Head of caudate nucleus (tissue), 42 donors: ENCODE measurements at regions of chr2 and their contacts with region 1.

Region 1: GRCh38 chr2:32946314-32947075 is at the start of gene LTBP1:
- DNase-seq: peak; percentile 53 to 88 (median 72)

Region 2: GRCh38 chr2:32772638-32773447 is 173.7 kb before region 1 on chr2:
- intact Hi-C with region 1: loop called (anchors 5 kb)
- DNase-seq: peak in 22 of 42 donors; percentile 5 to 67 (median 28)

Region 3: GRCh38 chr2:32812316-32812715 is 134.2 kb before region 1 on chr2:
- intact Hi-C with region 1: no loop called
- DNase-seq: no peak

Region 4: DNA sequence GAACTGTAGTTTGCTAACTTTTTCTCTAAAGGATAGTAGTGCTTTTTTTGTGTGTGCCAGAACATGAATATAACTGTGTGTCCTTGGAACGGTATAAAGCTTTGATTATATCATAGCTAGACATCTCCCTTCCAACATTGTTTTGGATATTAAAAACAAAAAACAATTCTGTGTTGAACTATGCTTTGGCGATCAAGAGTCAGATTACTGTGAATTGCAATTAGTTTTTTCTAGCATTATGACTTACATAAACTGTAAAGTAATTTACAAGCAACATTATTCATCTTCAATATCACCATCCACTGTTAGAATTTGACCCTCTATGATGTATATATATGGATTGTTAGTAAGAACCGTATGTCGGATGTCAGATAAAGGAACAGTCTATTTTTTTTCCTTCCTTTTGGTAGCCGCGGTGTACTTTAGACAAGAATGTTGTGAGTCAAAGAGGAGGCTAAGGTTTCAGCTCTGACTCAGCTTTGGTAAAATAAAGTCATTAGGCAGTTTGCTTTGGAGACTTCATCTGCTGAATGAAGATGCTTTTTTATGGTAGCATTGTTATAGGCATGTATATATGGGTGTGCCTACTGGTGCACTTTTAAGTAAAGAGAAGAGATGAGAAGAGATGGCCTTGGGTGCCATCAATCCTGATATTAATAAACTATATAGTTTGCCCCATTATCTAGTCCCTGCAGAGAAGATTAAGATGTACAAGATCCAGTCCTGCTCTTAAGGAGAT is 76.7 kb after region 1 on chr2:
- intact Hi-C with region 1: loop called (anchors 10 kb)
- DNase-seq: no peak